Activated CD4-positive, alpha-beta T cell treated with anti-CD3 and anti-CD28 coated beads for 36 hours (primary cell): ENCODE measurements at regions of chr5 and their contacts with region 1.

Region 1: GRCh38 chr5:138752951-138753793 is at the start of gene CTNNA1:
- DNase-seq: peak; percentile 77
- ATAC-seq: peak; percentile 60
- H3K4me3 Mint-ChIP-seq: peak within 1 kb of the TSS; percentile 73
- H3K27ac Mint-ChIP-seq: peak within 1 kb of the TSS; percentile 49
- H3K4me1 Mint-ChIP-seq: peaks cover 30% of the 10 kb centered on the region
- H3K27me3 Mint-ChIP-seq: peaks cover 30% of the 10 kb centered on the region
- total RNA-seq, gene CTNNA1: 78.8 to 86.7 TPM

Region 2: DNA sequence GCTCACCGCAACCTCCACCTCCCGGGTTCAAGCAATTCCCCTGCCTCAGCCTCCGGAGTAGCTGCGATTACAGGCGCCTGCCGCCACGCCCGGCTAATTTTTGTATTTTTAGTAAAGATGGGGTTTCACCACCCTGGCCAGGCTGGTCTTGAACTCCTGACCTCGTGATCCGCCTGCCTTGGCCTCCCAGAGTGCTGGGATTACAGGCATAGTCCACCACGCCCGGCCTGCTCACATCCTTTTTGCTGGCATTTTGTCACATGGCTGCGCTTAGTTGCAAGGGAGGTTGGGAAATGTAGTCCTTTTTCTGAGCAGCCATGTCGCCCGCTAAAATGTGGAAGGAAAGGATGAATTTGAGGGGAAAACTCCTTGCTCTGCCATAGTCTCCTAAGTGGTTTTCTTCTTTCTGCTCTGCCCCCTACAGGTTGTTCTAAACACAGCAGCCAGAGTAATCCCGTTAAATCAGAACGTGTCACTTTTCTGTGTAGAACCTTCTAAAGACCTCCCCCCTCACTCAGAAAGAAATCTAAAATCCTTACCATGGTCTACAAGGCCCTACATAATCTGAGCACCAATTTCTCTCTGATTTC is 120.2 kb before region 1 on chr5:
- CTCF ChIA-PET with region 1: no interaction called
- POLR2A ChIA-PET with region 1: no interaction called
- intact Hi-C with region 1: no loop called
- DNase-seq: peak; percentile 47
- ATAC-seq: peak; percentile 88
- H3K4me3 Mint-ChIP-seq: no peak overlapping the region
- H3K27ac Mint-ChIP-seq: no peak overlapping the region
- H3K4me1 Mint-ChIP-seq: no peaks in the 10 kb centered on the region
- H3K27me3 Mint-ChIP-seq: peaks cover 36% of the 10 kb centered on the region

Region 3: GRCh38 chr5:138696503-138697191 is 56.5 kb before region 1 on chr5:
- CTCF ChIA-PET with region 1: no interaction called
- POLR2A ChIA-PET with region 1: no interaction called
- intact Hi-C with region 1: no loop called
- DNase-seq: no peak
- ATAC-seq: no peak
- H3K4me3 Mint-ChIP-seq: no peak overlapping the region
- H3K27ac Mint-ChIP-seq: no peak overlapping the region
- H3K4me1 Mint-ChIP-seq: peaks cover 4% of the 10 kb centered on the region
- H3K27me3 Mint-ChIP-seq: peaks cover 29% of the 10 kb centered on the region

Region 4: DNA sequence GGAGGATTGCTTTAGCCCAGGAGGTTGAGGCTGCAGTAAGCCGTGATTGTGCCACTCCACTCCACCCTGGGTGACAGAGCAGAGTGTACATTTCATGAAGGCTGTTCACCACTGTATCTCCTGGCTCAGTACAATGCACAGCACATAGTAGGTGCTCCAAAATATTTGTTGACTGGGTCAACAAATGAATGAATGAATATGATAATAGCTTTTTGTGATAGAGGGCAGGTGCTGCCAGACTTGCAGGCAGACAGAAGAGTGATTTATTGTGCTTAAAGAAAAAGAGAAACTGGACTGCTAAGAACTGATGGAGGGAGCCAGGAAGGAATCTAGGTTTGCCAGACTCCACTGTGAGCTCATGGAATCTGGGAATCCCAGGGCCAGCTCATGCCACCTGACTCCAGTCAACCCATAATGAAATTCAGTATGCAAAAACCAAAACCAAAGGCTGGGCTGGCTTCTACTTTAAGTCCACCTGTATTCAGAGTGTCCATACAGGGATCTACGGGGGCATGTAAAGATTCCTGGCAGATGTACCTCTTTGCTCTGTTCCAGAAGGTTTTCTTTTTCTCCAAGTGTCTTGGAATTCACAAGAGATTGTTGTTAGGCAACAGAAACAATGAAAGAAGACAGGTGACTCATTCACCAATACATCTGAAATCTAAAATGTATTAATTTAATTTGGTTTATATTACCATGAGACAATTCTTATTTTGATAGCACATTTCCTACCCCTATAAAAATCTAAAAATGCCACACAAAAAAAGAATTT is 15.5 kb before region 1 on chr5:
- CTCF ChIA-PET with region 1: no interaction called
- POLR2A ChIA-PET with region 1: no interaction called
- intact Hi-C with region 1: loop called in 1 of 2 experiments (anchors 1 kb)
- DNase-seq: no peak
- ATAC-seq: no peak
- H3K4me3 Mint-ChIP-seq: no peak overlapping the region
- H3K27ac Mint-ChIP-seq: no peak overlapping the region
- H3K4me1 Mint-ChIP-seq: peaks cover 33% of the 10 kb centered on the region
- H3K27me3 Mint-ChIP-seq: peaks cover 12% of the 10 kb centered on the region

Region 5: DNA sequence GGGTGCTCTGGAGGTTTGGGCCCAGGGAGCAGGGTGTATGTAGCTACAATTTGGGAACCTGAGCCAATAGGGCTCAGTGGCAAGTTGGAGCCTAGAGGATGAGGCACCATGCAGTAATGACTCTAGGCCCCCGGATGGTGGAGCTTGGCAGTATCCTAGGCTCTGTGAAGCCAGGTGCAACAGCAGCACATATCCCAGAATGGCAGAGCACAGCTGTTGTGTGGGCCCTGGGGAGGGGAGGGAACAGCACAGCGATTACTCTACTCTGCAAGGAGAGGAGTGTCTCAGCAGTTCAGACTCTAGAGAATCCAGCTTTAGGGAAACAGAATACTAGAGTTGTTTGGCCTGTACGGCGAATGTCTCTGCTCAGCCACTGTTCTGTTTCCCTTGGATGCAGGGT is 65.9 kb after region 1 on chr5:
- CTCF ChIA-PET with region 1: no interaction called
- POLR2A ChIA-PET with region 1: no interaction called
- intact Hi-C with region 1: no loop called
- DNase-seq: no peak
- ATAC-seq: no peak
- H3K4me3 Mint-ChIP-seq: no peak overlapping the region
- H3K27ac Mint-ChIP-seq: no peak overlapping the region
- H3K4me1 Mint-ChIP-seq: no peaks in the 10 kb centered on the region
- H3K27me3 Mint-ChIP-seq: peaks cover 9% of the 10 kb centered on the region

Region 6: GRCh38 chr5:138832218-138832617 is 79.0 kb after region 1 on chr5:
- CTCF ChIA-PET with region 1: no interaction called
- POLR2A ChIA-PET with region 1: no interaction called
- intact Hi-C with region 1: no loop called
- DNase-seq: no peak
- ATAC-seq: no peak
- H3K4me3 Mint-ChIP-seq: no peak overlapping the region
- H3K27ac Mint-ChIP-seq: no peak overlapping the region
- H3K4me1 Mint-ChIP-seq: peaks cover 2% of the 10 kb centered on the region
- H3K27me3 Mint-ChIP-seq: no peaks in the 10 kb centered on the region